ENCODE measurements at regions of chr17 and their contacts with region 1.

Region 1: DNA sequence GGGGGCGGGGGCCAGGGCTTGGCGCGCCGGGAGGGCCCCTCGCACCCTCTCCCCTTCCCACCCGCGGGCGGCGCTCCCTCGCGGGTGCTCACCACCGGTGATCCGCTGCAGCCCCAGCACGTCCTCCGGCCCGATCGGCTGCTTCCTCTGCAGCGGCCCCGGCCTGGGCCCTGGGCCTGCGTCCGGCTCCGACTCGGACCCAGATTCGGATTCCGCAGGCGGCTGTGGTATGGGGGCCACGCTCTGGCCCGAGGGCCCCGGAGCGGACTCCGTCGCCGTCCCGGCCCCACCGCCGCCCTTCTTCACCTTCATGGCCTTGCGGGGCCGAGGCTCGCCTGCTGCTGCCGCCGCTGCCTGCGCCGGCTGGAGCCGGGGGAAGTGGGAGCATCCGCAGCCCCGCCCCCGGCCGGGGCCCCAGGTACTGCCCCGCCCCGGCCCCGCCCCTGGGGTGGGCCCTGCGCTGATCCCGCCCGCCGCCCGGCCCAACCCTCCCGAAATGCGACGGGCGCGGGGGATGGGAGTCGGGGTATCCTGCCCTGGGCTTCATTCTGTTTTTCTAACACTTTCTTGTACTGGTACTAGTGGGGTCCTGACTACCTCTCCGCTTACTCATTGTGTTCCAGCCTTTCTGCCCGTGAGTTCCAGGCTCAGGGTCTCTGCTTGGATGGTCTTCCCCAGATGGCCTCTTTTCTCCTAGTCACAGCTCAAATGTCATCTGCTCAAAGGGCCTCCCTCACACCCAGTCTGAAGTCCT is at the start of gene UNC119:
- DNase-seq: peak in 1 of 2 experiments; percentile 88
- H3K4me3 ChIP-seq: peak within 1 kb of the TSS; percentile 75 to 89 (median 80)
- H3K27ac ChIP-seq: no peak within 1 kb of the TSS; the same call in 1 of the 2 replicates
- H3K4me1 ChIP-seq: peaks cover 0 to 15% (median 2%) of the 10 kb centered on the region in 4 experiments; a peak in 3 of 7 replicates
- H3K27me3 ChIP-seq: no peaks in the 10 kb centered on the region; a peak in 1 of 7 replicates
- CTCF ChIP-seq: no peak
- EP300 ChIP-seq: no peak
- POLR2A ChIP-seq: peak in 1 of 2 experiments; percentile 69; a peak in 2 of 3 replicates
- RAD21 ChIP-seq: no peak
- total RNA-seq, gene UNC119: 43.5 and 44.1 TPM in 2 replicates

Region 2: GRCh38 chr17:28484296-28484695 is 68.1 kb before region 1 on chr17:
- CTCF ChIA-PET with region 1: interaction called, 54 read pairs
- POLR2A ChIA-PET with region 1: interaction called, 3 read pairs
- DNase-seq: no peak
- H3K4me3 ChIP-seq: no peak overlapping the region
- H3K27ac ChIP-seq: no peak overlapping the region
- H3K4me1 ChIP-seq: peaks cover 3 to 12% (median 6%) of the 10 kb centered on the region in 4 experiments
- H3K27me3 ChIP-seq: peaks cover 0 to 3% (median under 1%) of the 10 kb centered on the region in 4 experiments; a peak in 1 of 7 replicates
- CTCF ChIP-seq: no peak
- EP300 ChIP-seq: no peak
- POLR2A ChIP-seq: no peak
- RAD21 ChIP-seq: no peak

Region 3: GRCh38 chr17:28524476-28525368 is 27.7 kb before region 1 on chr17:
- CTCF ChIA-PET with region 1: interaction called, 45 read pairs
- POLR2A ChIA-PET with region 1: no interaction called
- DNase-seq: no peak
- H3K4me3 ChIP-seq: no peak overlapping the region
- H3K27ac ChIP-seq: no peak overlapping the region
- H3K4me1 ChIP-seq: peaks cover 0 to 15% (median 4%) of the 10 kb centered on the region in 4 experiments; a peak in 3 of 7 replicates
- H3K27me3 ChIP-seq: no peaks in the 10 kb centered on the region
- CTCF ChIP-seq: no peak
- EP300 ChIP-seq: no peak
- POLR2A ChIP-seq: no peak
- RAD21 ChIP-seq: no peak

Region 4: DNA sequence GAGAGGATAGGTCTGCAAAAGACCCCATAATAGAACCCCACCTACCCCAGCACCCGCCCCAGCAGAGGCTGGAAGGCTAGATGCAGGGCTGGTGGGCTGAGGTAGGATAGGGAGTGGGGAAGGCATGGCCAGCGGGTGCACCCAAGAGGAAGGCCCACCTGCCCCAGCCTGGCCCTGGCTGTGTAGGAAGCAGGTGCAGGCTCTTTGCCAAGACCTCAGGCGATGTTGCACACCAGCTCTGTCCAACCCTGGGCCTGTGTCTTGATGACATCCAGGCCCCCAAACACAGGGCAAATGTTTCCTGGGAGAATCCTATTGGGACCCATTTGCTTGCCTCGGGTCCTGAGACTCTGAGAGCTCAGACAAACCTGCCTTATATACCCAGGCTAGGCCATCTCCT is 12.2 kb before region 1 on chr17:
- CTCF ChIA-PET with region 1: interaction called, 80 read pairs
- POLR2A ChIA-PET with region 1: no interaction called
- DNase-seq: no peak
- H3K4me3 ChIP-seq: no peak overlapping the region
- H3K27ac ChIP-seq: no peak overlapping the region
- H3K4me1 ChIP-seq: peaks cover 0 to 7% (median 0%) of the 10 kb centered on the region in 4 experiments; a peak in 2 of 7 replicates
- H3K27me3 ChIP-seq: no peaks in the 10 kb centered on the region
- CTCF ChIP-seq: no peak
- EP300 ChIP-seq: no peak
- POLR2A ChIP-seq: no peak
- RAD21 ChIP-seq: no peak

Region 5: GRCh38 chr17:28571255-28572122 is 19.1 kb after region 1 on chr17 and contains the start of gene PIGS:
- CTCF ChIA-PET with region 1: interaction called, 58 read pairs
- POLR2A ChIA-PET with region 1: interaction called, 23 read pairs
- DNase-seq: peak; percentile 76 to 94
- H3K4me3 ChIP-seq: peak within 1 kb of the TSS; percentile 79 to 94 (median 90)
- H3K27ac ChIP-seq: 0 out of 2 replicates have a peak within 1 kb of the TSS, but pooled peaks have one; percentile 11
- H3K4me1 ChIP-seq: peaks cover 0 to 6% (median 3%) of the 10 kb centered on the region in 4 experiments; a peak in 2 of 7 replicates
- H3K27me3 ChIP-seq: peaks cover 0 to 8% (median 4%) of the 10 kb centered on the region in 4 experiments; a peak in 4 of 7 replicates
- CTCF ChIP-seq: no peak; a peak in 1 of 4 replicates
- EP300 ChIP-seq: no peak
- POLR2A ChIP-seq: peak in 1 of 2 experiments; percentile 73; a peak in 2 of 3 replicates
- RAD21 ChIP-seq: no peak
- total RNA-seq, gene PIGS: 47.4 and 50.6 TPM in 2 replicates

Region 6: GRCh38 chr17:28750178-28751047 is 198.0 kb after region 1 on chr17:
- CTCF ChIA-PET with region 1: no interaction called
- POLR2A ChIA-PET with region 1: no interaction called
- DNase-seq: peak in 1 of 2 experiments; percentile 96
- H3K4me3 ChIP-seq: no peak overlapping the region
- H3K27ac ChIP-seq: no peak overlapping the region
- H3K4me1 ChIP-seq: peaks cover 0 to 30% (median 24%) of the 10 kb centered on the region in 4 experiments; a peak in 6 of 7 replicates
- H3K27me3 ChIP-seq: no peaks in the 10 kb centered on the region
- CTCF ChIP-seq: peak; percentile 98 to 100 (median 100)
- EP300 ChIP-seq: 0 out of 3 replicates have a peak, but pooled peaks of 1 of the 2 experiments have one; percentile 5
- POLR2A ChIP-seq: peak in 1 of 2 experiments; percentile 73; a peak in 2 of 3 replicates
- RAD21 ChIP-seq: peak; percentile 71 to 81

Measured in H1 (cell line).